ENCODE measurements at regions of chr2 and their contacts with region 1.

Region 1: GRCh38 chr2:144332356-144333142 is 187.4 kb downstream of the ZEB2 start:
- DNase-seq: peak; percentile 83
- ATAC-seq: peak; percentile 96
- H3K4me3 ChIP-seq: peak overlapping the region; percentile 87
- H3K27ac ChIP-seq: no peak overlapping the region; the same call in 1 of the 2 replicates
- H3K4me1 ChIP-seq: no peaks in the 10 kb centered on the region
- H3K27me3 ChIP-seq: no peaks in the 10 kb centered on the region
- CTCF ChIP-seq: no peak
- POLR2A ChIP-seq: peak; percentile 63; the same call in 1 of the 2 replicates
- RAD21 ChIP-seq: peak; percentile 2

Region 2: DNA sequence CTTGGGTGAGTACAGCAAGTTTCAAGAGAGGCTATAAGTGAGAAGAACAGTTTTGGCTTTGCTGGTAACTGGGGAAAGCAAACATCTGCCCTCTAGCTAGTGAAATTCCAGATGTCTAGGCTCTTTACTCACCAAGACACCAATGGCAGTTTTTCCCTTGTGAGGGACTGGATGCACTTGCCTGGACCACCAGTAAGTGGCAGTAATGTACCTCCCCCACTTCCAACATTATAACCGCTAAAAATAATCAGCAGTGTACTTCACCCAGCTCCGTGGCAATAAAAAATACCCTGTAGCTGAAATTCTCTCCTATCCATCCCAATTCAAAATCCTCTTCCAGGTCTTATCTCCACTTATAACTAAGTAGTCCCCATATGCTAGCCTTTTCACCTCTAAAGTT is 819.5 kb before region 1 on chr2:
- CTCF ChIA-PET with region 1: no interaction called
- POLR2A ChIA-PET with region 1: no interaction called
- dilution Hi-C with region 1: no loop called
- in situ Hi-C with region 1: no loop called
- intact Hi-C with region 1: loop called (anchors 5 kb)
- DNase-seq: peak; percentile 75
- ATAC-seq: peak; percentile 100
- H3K4me3 ChIP-seq: no peak overlapping the region
- H3K27ac ChIP-seq: no peak overlapping the region
- H3K4me1 ChIP-seq: no peaks in the 10 kb centered on the region; the same call in 1 of the 2 replicates
- H3K27me3 ChIP-seq: no peaks in the 10 kb centered on the region
- CTCF ChIP-seq: peak; percentile 84
- POLR2A ChIP-seq: no peak
- RAD21 ChIP-seq: peak; percentile 90

Region 3: DNA sequence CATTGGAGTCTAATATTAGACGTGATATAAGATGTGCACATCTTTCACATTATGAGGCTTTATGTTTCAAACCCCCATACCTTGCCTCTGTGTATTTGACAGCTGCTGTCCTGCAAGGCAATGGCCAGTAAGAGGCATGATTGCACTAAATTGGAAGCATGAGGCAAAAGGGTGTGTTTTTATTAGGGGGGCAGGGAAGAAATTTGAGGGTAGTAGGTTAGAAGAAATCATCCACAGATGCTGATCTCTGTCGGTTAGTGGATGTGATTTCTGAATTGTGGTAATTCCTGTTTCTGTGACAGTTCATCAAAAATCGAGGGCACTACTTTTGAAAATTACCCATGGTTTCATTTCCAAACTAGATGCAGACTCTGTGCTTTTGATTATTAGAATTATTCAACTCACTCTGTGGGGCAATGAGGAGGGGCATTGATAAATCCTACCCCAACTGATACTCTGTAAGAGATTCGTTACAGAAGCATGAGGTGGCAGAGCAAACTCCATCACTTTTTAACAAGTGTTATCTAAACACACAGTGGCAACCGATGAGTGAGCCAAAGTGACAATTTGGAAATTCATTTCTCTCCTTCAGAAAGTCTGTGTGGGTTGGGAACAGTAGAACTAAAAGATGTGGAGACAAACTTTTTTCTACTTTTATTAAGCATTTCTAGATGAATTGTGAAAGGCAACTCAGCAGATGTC is 750.4 kb before region 1 on chr2:
- CTCF ChIA-PET with region 1: no interaction called
- POLR2A ChIA-PET with region 1: no interaction called
- dilution Hi-C with region 1: no loop called
- in situ Hi-C with region 1: no loop called
- intact Hi-C with region 1: loop called (anchors 5 kb)
- DNase-seq: peak; percentile 52
- ATAC-seq: peak; percentile 85
- H3K4me3 ChIP-seq: no peak overlapping the region
- H3K27ac ChIP-seq: no peak overlapping the region
- H3K4me1 ChIP-seq: no peaks in the 10 kb centered on the region; the same call in 1 of the 2 replicates
- H3K27me3 ChIP-seq: no peaks in the 10 kb centered on the region
- CTCF ChIP-seq: peak; percentile 55
- POLR2A ChIP-seq: no peak
- RAD21 ChIP-seq: peak; percentile 63

Region 4: DNA sequence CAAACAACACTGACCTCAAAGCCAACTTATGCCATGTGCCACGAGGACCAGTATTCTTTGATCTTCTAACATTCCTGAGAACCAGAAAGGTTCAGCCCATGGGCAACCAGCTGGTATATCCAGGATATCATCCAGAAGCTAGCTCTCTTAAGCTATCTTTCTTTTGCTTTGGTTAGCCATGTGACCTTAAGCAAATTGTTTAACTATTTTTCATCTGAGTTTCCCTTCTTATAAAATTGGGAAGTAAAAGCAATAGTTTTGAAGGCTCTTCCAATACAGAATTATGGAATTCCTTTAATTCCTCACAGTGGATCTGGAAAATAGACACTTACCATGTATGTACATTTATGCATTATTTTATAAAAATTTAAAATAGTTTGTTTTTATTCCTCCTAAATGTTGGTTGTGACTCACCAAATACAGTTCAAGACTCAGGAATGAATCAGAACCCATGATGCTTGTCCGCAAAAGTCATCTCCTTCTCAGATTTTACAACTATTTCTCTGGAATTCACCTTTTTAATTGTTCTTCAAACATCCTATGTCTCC is 248.4 kb before region 1 on chr2:
- CTCF ChIA-PET with region 1: no interaction called
- POLR2A ChIA-PET with region 1: no interaction called
- dilution Hi-C with region 1: no loop called
- in situ Hi-C with region 1: no loop called
- intact Hi-C with region 1: loop called (anchors 5 kb)
- DNase-seq: peak; percentile 84
- ATAC-seq: peak; percentile 65
- H3K4me3 ChIP-seq: no peak overlapping the region
- H3K27ac ChIP-seq: peak overlapping the region; percentile 99
- H3K4me1 ChIP-seq: peaks cover 18% of the 10 kb centered on the region; the same call in 1 of the 2 replicates
- H3K27me3 ChIP-seq: no peaks in the 10 kb centered on the region
- CTCF ChIP-seq: no peak
- POLR2A ChIP-seq: no peak
- RAD21 ChIP-seq: no peak

Region 5: DNA sequence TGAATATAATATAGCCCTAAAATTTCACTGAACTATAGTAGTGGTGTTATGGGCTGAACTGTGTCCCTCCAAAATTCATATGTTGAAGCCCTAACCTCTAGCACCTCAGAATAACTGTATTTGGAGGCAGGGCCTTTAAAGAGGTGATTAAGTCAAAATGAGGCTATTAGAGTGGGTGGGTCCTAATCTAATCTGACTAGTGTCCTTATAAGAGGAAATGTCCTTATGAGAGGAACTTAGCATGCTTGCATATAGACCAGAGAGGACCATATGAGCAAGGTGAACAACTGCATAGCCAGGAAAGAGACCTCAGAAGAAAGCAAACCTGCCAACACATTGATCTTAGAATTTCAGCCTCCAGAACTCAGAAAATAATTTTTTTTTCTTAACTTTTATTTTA is 51.1 kb before region 1 on chr2:
- CTCF ChIA-PET with region 1: no interaction called
- POLR2A ChIA-PET with region 1: no interaction called
- dilution Hi-C with region 1: no loop called
- in situ Hi-C with region 1: no loop called
- intact Hi-C with region 1: no loop called
- DNase-seq: no peak
- ATAC-seq: no peak
- H3K4me3 ChIP-seq: no peak overlapping the region
- H3K27ac ChIP-seq: no peak overlapping the region
- H3K4me1 ChIP-seq: peaks cover 2% of the 10 kb centered on the region; the same call in 1 of the 2 replicates
- H3K27me3 ChIP-seq: no peaks in the 10 kb centered on the region
- CTCF ChIP-seq: no peak
- POLR2A ChIP-seq: no peak
- RAD21 ChIP-seq: no peak

Region 6: DNA sequence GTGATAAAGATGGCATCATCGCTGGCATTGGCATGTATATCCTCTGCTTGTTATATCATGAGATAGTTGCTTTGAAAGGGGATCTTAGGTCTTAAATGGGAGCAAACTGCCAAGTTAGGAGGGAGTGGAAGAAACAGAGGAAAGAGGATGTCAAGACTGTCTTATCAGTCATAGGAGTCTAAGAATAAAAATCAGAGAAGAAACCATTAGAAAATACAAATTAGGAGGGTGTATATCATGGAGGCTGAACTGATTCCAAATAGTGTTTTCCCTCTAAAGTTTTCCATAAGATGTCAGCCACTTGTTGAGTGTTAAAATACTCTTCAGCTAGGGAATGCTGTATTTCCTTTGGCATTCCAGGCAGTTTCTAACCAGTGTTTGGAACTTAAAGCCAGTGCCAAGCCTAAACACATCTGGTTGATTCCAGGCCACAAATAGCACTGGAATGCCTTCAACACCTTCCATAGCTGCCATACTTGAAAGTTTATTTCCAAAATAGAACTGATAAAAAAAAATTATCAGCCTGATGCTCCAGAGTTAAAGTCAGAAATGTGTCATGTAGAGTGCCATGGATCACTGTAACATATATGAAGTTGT is 58.0 kb after region 1 on chr2:
- CTCF ChIA-PET with region 1: no interaction called
- POLR2A ChIA-PET with region 1: no interaction called
- dilution Hi-C with region 1: no loop called
- in situ Hi-C with region 1: no loop called
- intact Hi-C with region 1: loop called (anchors 5 kb)
- DNase-seq: peak; percentile 57
- ATAC-seq: peak; percentile 78
- H3K4me3 ChIP-seq: no peak overlapping the region
- H3K27ac ChIP-seq: no peak overlapping the region
- H3K4me1 ChIP-seq: no peaks in the 10 kb centered on the region; the same call in 1 of the 2 replicates
- H3K27me3 ChIP-seq: no peaks in the 10 kb centered on the region
- CTCF ChIP-seq: no peak
- POLR2A ChIP-seq: no peak
- RAD21 ChIP-seq: no peak

Region 7: GRCh38 chr2:144456680-144457079 is 124.1 kb after region 1 on chr2:
- CTCF ChIA-PET with region 1: no interaction called
- POLR2A ChIA-PET with region 1: no interaction called
- dilution Hi-C with region 1: no loop called
- in situ Hi-C with region 1: no loop called
- intact Hi-C with region 1: loop called (anchors 5 kb)
- DNase-seq: peak; percentile 97
- ATAC-seq: peak; percentile 81
- H3K4me3 ChIP-seq: no peak overlapping the region
- H3K27ac ChIP-seq: no peak overlapping the region
- H3K4me1 ChIP-seq: peaks cover 24% of the 10 kb centered on the region
- H3K27me3 ChIP-seq: no peaks in the 10 kb centered on the region
- CTCF ChIP-seq: no peak
- POLR2A ChIP-seq: no peak
- RAD21 ChIP-seq: 0 out of 2 replicates have a peak, but pooled peaks have one; percentile 16